ENCODE measurements at regions of chr18 and their contacts with region 1.

Region 1: DNA sequence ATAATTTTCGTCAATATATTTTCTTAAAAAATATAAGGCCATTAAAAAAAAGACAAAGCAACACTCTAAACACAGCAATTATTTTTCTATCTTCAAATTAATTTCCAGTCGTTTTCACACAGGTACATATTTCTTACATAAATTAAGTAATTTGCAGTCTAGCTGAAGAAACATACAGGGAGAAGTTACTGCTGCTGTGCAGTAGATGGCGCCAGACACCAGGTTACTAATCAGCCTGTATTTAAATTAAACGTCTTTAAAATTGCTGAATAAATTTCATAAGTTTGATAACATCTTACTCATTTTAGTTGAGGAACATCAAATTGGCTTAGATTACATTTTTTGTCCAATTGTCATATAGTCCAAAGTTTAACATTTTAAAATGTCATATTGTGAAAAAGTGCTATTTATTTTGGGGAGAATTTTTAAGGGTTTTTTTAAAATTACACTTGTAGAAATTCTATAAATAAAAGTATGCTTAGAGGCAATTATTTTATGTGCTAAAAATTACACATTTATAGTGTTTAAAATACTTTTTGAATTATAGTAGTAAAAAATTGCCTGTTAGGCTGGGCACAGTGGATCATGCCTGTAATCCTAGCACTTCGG is 88.4 kb downstream of the PMAIP1 start:
- DNase-seq: peak; percentile 11 to 70 (median 30)
- ATAC-seq: no peak
- H3K4me3 ChIP-seq: no peak overlapping the region
- H3K4me3 Mint-ChIP-seq: no peak overlapping the region
- H3K27ac ChIP-seq: no peak overlapping the region
- H3K27ac Mint-ChIP-seq: no peak overlapping the region
- H3K4me1 ChIP-seq: no peaks in the 10 kb centered on the region
- H3K4me1 Mint-ChIP-seq: no peaks in the 10 kb centered on the region
- H3K27me3 ChIP-seq: peaks cover 2 to 13% of the 10 kb centered on the region in 2 experiments
- H3K27me3 Mint-ChIP-seq: peaks cover 24% of the 10 kb centered on the region
- CTCF ChIP-seq: peak; percentile 96

Region 2: DNA sequence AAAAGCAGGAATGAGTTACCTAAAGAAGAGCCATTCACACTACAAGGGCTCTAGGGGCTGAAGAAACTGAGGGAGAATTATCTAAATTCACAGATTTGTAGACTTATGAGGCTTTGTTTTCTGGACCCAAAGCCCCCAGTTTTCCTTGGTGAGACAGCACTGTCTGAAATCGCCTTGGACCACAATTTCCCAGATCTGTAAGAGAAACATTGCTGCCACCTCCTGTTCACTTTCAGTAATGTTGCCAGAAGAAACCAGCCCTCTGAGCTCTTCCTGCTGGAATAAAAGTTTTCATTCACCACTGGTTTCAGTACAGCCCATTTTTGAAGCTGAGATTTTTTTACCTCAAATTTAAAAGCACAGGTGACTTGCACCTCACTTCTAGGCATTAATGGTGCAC is 1514.3 kb after region 1 on chr18:
- CTCF ChIA-PET with region 1: no interaction called
- POLR2A ChIA-PET with region 1: no interaction called
- intact Hi-C with region 1: loop called (anchors 5 kb)
- DNase-seq: peak in 1 of 14 experiments; percentile 7
- ATAC-seq: no peak
- H3K4me3 ChIP-seq: no peak overlapping the region
- H3K4me3 Mint-ChIP-seq: no peak overlapping the region
- H3K27ac ChIP-seq: no peak overlapping the region
- H3K27ac Mint-ChIP-seq: no peak overlapping the region
- H3K4me1 ChIP-seq: no peaks in the 10 kb centered on the region
- H3K4me1 Mint-ChIP-seq: no peaks in the 10 kb centered on the region
- H3K27me3 ChIP-seq: peaks cover 0 to 6% of the 10 kb centered on the region in 2 experiments
- H3K27me3 Mint-ChIP-seq: peaks cover 23% of the 10 kb centered on the region
- CTCF ChIP-seq: no peak

Region 3: GRCh38 chr18:61581578-61582201 is 1593.5 kb after region 1 on chr18:
- CTCF ChIA-PET with region 1: no interaction called
- POLR2A ChIA-PET with region 1: no interaction called
- intact Hi-C with region 1: loop called in 1 of 2 experiments (anchors 5 kb)
- DNase-seq: peak; percentile 45 to 77 (median 56)
- ATAC-seq: peak; percentile 72
- H3K4me3 ChIP-seq: no peak overlapping the region
- H3K4me3 Mint-ChIP-seq: no peak overlapping the region
- H3K27ac ChIP-seq: no peak overlapping the region
- H3K27ac Mint-ChIP-seq: no peak overlapping the region
- H3K4me1 ChIP-seq: peaks cover 8% of the 10 kb centered on the region
- H3K4me1 Mint-ChIP-seq: peaks cover 9% of the 10 kb centered on the region
- H3K27me3 ChIP-seq: peaks cover 14 to 17% of the 10 kb centered on the region in 2 experiments
- H3K27me3 Mint-ChIP-seq: peaks cover 82% of the 10 kb centered on the region
- CTCF ChIP-seq: peak; percentile 95

Region 4: GRCh38 chr18:61901323-61901986 is 1913.3 kb after region 1 on chr18:
- CTCF ChIA-PET with region 1: no interaction called
- POLR2A ChIA-PET with region 1: no interaction called
- intact Hi-C with region 1: loop called in 1 of 2 experiments (anchors 5 kb)
- DNase-seq: peak in 12 of 14 experiments; percentile 2 to 66 (median 24)
- ATAC-seq: peak; percentile 74
- H3K4me3 ChIP-seq: no peak overlapping the region
- H3K4me3 Mint-ChIP-seq: no peak overlapping the region
- H3K27ac ChIP-seq: no peak overlapping the region
- H3K27ac Mint-ChIP-seq: no peak overlapping the region
- H3K4me1 ChIP-seq: no peaks in the 10 kb centered on the region
- H3K4me1 Mint-ChIP-seq: no peaks in the 10 kb centered on the region
- H3K27me3 ChIP-seq: peaks cover 7 to 9% of the 10 kb centered on the region in 2 experiments
- H3K27me3 Mint-ChIP-seq: peaks cover 51% of the 10 kb centered on the region
- CTCF ChIP-seq: peak; percentile 84